Aorta (tissue), 5 donors: ENCODE measurements at regions of chr10 and their contacts with region 1.

Region 1: DNA sequence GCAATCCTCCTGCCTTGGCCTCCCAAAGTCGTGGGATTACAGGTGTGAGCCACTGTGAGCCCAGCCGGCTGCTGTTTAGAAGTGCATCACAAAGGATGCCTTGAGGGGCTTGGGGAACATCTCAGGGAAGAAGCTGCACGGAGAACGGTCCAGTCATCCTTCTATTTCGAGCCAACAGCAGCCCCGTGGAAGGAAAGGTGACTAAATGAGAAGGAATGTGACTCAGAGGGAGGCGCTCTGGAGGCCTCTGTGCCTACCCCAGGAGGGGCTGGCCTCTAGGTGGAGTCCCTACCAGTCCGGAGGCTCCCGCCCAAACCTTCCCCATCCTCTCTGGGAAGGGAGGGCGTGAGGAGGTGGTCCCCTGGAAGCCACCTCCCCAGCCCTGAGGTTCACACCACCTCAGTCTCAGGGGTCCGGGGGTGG is 76.2 kb downstream of the CTBP2 start:
- DNase-seq: peak; percentile 82 to 89
- ATAC-seq: peak; percentile 88
- H3K4me3 ChIP-seq: no peak overlapping the region
- H3K27ac ChIP-seq: peak overlapping the region; percentile 85 to 91
- H3K4me1 ChIP-seq: peaks cover 0 to 7% of the 10 kb centered on the region in 2 donors
- H3K27me3 ChIP-seq: no peaks in the 10 kb centered on the region

Region 2: GRCh38 chr10:125054669-125055268 is 29.4 kb before region 1 on chr10:
- intact Hi-C with region 1: no loop called
- DNase-seq: peak in 1 of 2 donors; percentile 3
- ATAC-seq: no peak
- H3K4me3 ChIP-seq: no peak overlapping the region
- H3K27ac ChIP-seq: peak overlapping the region; percentile 48 to 76
- H3K4me1 ChIP-seq: peaks cover 0 to 3% of the 10 kb centered on the region in 2 donors
- H3K27me3 ChIP-seq: no peaks in the 10 kb centered on the region

Region 3: DNA sequence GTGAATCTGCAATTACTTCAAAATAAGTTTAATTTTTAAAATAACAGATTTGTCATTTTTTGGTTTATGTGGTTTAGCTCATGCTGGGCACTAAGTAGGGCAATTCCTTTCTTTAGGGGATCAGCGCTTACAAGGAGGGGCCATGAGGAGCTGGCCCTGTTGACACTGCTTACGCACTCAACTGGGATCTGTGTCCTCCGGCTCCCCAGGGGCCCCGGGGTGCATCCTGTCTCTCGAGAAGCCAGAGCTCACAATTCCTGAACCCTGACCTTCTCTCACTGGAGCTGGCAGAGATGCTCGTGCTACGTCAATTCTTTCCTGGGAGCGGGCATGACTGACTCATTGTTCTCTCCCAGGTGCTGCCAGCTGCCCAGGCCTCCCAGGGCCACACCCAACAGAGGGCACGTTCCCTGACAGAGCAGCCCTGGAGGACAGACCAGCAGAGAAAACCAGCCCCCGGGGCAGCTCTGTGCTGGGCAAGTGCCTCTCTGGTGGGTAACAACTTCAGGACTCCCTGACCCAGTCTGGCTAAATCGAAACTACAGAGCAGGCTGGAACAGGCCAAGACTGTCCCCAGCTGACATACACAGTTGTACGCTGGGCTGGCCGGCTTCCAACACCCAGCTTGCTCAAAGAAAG is 39.4 kb after region 1 on chr10:
- intact Hi-C with region 1: loop called (anchors 5 kb)
- DNase-seq: peak; percentile 84 to 89
- ATAC-seq: peak; percentile 79
- H3K4me3 ChIP-seq: no peak overlapping the region
- H3K27ac ChIP-seq: peak overlapping the region in 1 of 2 donors; percentile 85
- H3K4me1 ChIP-seq: peaks cover 5 to 10% of the 10 kb centered on the region in 2 donors
- H3K27me3 ChIP-seq: no peaks in the 10 kb centered on the region

Region 4: GRCh38 chr10:125144693-125145623 is 60.8 kb after region 1 on chr10:
- intact Hi-C with region 1: loop called in 1 of 2 experiments (anchors 5 kb)
- DNase-seq: peak in 1 of 2 donors; percentile 77
- ATAC-seq: no peak
- H3K4me3 ChIP-seq: no peak overlapping the region
- H3K27ac ChIP-seq: no peak overlapping the region
- H3K4me1 ChIP-seq: no peaks in the 10 kb centered on the region
- H3K27me3 ChIP-seq: no peaks in the 10 kb centered on the region